Dorsolateral prefrontal cortex (tissue), 120 donors: ENCODE measurements at regions of chr20 and their contacts with region 1.

Region 1: GRCh38 chr20:46363800-46364634 is 42.4 kb downstream of the ELMO2 start:
- DNase-seq: peak; percentile 68 to 95 (median 84)
- H3K4me3 ChIP-seq: peak overlapping the region; percentile 65 to 100 (median 99)
- H3K27ac ChIP-seq: peak overlapping the region; percentile 79 to 99 (median 96)
- H3K27me3 ChIP-seq: no peaks in the 10 kb centered on the region
- CTCF ChIP-seq: peak in 7 of 56 donors; percentile 14 to 36 (median 24)

Region 2: DNA sequence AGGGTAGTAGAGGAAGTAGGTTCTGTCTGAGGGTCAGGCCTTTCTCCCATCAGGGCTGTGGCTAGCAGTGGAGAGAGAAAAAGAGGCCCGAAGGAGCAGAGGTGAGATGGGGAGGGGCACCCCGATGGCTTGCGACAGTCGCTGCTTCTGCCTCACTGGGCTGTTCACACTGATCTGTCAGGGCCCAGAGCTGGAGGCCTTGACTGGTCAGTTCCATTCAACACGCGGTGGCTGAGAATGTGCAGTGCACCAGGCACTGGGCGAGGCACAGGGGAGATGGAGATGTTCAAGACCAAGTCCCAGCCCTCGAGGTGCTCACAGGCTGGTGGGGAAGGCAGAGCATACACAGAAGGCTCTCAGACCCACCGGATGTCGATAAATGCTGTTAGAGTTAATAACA is 313.6 kb before region 1 on chr20:
- intact Hi-C with region 1: no loop called
- DNase-seq: no peak
- H3K4me3 ChIP-seq: no peak overlapping the region
- H3K27ac ChIP-seq: peak overlapping the region in 1 of 59 donors; percentile 4
- H3K27me3 ChIP-seq: peaks cover 0 to 4% (median 0%) of the 10 kb centered on the region in 45 donors
- CTCF ChIP-seq: no peak

Region 3: DNA sequence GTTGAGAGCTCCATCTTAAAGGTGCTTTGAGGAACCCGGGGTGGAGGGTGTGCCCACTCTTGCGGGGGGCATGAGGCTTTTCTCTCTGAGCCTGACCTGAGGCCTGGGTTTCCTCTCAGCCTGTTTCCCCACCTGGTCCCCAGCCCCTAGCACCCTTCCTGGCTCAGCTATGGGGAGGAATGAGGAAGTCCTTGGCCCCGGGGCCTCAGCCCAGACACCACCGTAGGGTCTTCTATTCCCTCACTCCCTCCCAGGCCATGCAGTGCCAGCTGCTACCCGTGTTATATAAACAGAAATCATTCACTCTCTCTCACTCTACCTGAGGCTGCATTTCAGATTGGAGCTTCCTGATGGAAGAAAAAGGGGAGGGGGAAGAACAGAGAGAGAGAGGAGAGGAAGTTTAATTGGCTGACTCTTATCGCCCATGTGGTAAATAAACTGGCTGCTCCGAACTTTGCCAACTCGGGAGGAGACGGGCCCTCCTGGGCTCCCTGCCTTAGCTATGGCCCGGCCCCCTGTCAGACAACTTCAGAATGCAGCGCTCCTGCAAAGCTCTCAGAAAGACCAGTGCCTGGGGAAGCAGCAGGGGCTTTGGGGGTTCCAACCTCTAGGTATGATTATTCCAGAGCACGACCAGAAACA is 58.6 kb before region 1 on chr20:
- intact Hi-C with region 1: no loop called
- DNase-seq: no peak
- H3K4me3 ChIP-seq: peak overlapping the region in 2 of 59 donors; percentile 3 to 8
- H3K27ac ChIP-seq: peak overlapping the region in 5 of 59 donors; percentile 2 to 90 (median 7)
- H3K27me3 ChIP-seq: peaks cover 0 to 48% (median 12%) of the 10 kb centered on the region in 45 donors
- CTCF ChIP-seq: no peak

Region 4: DNA sequence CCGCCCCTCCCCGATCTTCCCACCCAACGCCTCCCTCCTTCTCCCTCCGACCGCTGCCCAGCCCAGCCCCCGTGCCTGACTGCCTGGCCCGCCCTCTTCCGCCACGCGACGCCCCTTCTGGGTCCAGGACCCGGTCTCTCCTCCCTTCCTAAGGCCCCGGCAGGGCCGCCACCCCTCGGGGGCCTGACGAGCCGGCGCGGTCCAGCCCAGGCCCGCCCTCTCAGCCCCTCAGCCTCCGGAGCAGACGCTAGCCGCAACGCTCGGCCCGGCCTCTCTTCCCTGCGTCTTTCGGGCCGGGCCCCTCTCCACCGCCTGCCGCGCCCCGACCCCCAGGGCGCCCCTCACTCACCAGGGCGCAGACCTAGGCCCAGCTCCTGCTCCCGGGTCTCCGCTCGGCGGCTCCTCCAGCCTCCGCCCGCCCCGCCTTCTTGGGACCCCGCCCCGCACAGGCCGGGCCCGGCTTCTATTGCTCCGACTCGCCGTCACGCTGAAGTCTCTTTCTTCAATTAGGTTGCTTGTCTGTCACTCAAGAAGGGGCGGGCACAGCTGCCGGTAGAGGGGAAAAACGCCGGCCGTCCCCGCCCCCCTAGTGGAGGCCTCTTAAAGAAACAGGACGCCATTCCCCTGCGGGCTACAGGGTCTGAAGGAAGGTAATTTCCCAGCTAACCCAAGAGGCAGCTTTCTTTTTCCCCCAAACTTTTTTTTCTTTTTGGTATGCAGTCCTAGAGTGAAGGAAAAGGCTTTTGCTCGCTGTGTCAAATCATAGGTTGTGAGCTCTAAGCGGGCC is 42.4 kb after region 1 on chr20 and contains the start of gene ELMO2:
- intact Hi-C with region 1: loop called (anchors 2 kb)
- DNase-seq: peak; percentile 93 to 98 (median 98)
- H3K4me3 ChIP-seq: peak within 1 kb of the TSS; percentile 69 to 99 (median 92)
- H3K27ac ChIP-seq: peak within 1 kb of the TSS; percentile 68 to 99 (median 95)
- H3K27me3 ChIP-seq: no peaks in the 10 kb centered on the region
- CTCF ChIP-seq: peak; percentile 19 to 76 (median 51)
- total RNA-seq, gene ELMO2: 74.1 to 143 (median 97.3) TPM

Region 5: DNA sequence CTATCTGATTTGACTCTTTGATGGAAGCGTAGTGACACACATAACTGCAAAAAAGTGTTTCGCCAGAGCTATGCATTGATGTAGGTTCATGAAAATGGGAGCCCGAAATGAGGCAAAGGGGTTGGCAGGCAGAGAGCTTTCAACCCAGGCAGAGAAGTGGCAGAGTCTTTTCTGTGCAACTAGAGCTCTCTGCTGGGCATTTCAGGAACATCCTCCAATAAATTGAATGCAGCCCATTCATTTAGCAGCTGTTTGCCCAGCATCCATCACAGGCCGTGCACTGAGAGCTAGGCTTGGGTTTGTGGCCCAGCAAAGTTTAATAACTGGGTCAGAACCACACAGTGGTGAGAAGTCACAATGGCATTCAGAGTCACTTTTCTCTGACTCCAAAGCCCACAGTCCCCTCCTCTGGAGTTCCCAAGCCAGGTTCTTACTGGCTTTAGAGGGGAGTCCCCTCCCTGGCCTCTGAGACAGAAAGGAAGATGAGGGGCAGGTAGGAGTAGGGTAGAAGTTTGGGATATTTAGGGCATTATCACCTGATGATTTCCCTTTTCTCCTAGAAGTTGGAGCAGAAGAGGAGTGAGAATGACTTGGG is 74.2 kb after region 1 on chr20:
- intact Hi-C with region 1: loop called in 1 of 2 experiments (anchors 5 kb)
- DNase-seq: peak in 9 of 10 donors; percentile 36 to 81 (median 63)
- H3K4me3 ChIP-seq: peak overlapping the region in 3 of 59 donors; percentile 27 to 33 (median 32)
- H3K27ac ChIP-seq: peak overlapping the region in 38 of 59 donors; percentile 5 to 80 (median 50)
- H3K27me3 ChIP-seq: no peaks in the 10 kb centered on the region
- CTCF ChIP-seq: peak; percentile 34 to 92 (median 74)